ENCODE measurements at regions of chr1 and their contacts with region 1.

Region 1: DNA sequence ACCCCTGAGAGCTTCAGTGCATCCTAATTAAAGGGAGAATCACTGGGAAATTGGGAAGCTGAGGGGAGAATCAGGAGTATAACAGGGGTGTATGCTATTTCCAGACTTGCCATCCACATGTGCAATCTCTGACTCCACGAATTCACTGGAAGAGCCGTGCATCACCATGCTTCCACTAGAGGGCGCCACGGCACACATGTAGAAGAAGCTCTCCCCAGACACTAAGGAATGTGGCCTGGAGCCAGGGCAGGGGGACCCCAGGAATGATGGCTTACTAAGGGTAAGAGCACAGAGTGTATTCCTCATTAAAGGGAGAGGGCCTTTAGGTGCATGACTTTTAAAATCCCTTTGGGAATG is 81.5 kb downstream of the ABCA4 start:
- DNase-seq: peak; percentile 24
- H3K4me3 Mint-ChIP-seq: no peak overlapping the region
- H3K27ac Mint-ChIP-seq: no peak overlapping the region
- H3K4me1 Mint-ChIP-seq: peaks cover 24% of the 10 kb centered on the region
- H3K27me3 Mint-ChIP-seq: peaks cover 12% of the 10 kb centered on the region

Region 2: DNA sequence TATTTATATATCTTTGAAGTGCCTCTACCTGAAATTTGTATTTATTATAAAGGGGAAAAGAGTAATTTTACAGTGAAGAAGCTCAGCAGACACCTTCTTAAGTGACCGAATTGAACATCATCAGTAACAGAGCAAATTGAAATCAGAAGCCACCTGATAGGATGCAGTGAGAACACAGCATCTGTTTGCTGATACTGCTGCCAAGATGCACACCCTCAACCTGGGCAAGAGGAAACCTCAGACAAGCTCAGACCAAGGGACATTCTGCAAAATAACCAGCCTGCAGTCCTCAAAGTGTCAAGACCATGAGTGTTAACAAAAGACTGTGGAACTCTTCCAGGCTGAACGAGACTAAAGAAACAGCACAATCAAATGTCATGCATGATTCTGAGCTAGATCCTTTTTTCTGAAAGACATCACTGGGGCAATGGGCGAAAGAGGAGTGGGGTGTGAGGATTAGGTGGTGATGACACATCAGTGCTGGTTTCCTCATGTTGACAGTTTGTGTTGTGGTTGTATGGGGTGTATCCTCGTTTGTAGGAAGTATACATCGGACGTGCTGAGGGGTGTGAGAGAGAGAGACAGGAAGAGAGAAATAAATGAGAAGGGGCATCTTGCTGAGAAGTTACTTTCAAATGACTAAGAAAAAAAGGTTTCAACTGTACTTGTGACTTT is 22.2 kb before region 1 on chr1:
- intact Hi-C with region 1: loop called (anchors 1 kb)
- DNase-seq: peak; percentile 42
- H3K4me3 Mint-ChIP-seq: peak overlapping the region; percentile 28
- H3K27ac Mint-ChIP-seq: peak overlapping the region; percentile 81
- H3K4me1 Mint-ChIP-seq: peaks cover 40% of the 10 kb centered on the region
- H3K27me3 Mint-ChIP-seq: peaks cover 6% of the 10 kb centered on the region